Psoas muscle (tissue), 8 donors: ENCODE measurements at regions of chr14 and their contacts with region 1.

Region 1: GRCh38 chr14:31419967-31420318 is 407 bp downstream of the HEATR5A start:
- DNase-seq: peak; percentile 65 to 80
- ATAC-seq: peak; percentile 67 to 81 (median 73)
- H3K4me3 ChIP-seq: peak overlapping the region; percentile 95
- H3K27ac ChIP-seq: peak overlapping the region; percentile 91
- H3K4me1 ChIP-seq: peaks cover 12% of the 10 kb centered on the region
- H3K27me3 ChIP-seq: no peaks in the 10 kb centered on the region
- CTCF ChIP-seq: no peak

Region 2: GRCh38 chr14:31456841-31457664 is 37.1 kb after region 1 on chr14 and contains the start of gene DTD2:
- intact Hi-C with region 1: loop called in 1 of 2 experiments (anchors 5 kb)
- DNase-seq: peak; percentile 95 to 97
- ATAC-seq: peak; percentile 99 to 100 (median 100)
- H3K4me3 ChIP-seq: peak within 1 kb of the TSS; percentile 90
- H3K27ac ChIP-seq: peak within 1 kb of the TSS; percentile 94
- H3K4me1 ChIP-seq: peaks cover 11% of the 10 kb centered on the region
- H3K27me3 ChIP-seq: no peaks in the 10 kb centered on the region
- CTCF ChIP-seq: no peak
- total RNA-seq, gene DTD2: 2.1 to 4.2 (median 3.3) TPM